ENCODE measurements at regions of chr13 and their contacts with region 1.

Region 1: DNA sequence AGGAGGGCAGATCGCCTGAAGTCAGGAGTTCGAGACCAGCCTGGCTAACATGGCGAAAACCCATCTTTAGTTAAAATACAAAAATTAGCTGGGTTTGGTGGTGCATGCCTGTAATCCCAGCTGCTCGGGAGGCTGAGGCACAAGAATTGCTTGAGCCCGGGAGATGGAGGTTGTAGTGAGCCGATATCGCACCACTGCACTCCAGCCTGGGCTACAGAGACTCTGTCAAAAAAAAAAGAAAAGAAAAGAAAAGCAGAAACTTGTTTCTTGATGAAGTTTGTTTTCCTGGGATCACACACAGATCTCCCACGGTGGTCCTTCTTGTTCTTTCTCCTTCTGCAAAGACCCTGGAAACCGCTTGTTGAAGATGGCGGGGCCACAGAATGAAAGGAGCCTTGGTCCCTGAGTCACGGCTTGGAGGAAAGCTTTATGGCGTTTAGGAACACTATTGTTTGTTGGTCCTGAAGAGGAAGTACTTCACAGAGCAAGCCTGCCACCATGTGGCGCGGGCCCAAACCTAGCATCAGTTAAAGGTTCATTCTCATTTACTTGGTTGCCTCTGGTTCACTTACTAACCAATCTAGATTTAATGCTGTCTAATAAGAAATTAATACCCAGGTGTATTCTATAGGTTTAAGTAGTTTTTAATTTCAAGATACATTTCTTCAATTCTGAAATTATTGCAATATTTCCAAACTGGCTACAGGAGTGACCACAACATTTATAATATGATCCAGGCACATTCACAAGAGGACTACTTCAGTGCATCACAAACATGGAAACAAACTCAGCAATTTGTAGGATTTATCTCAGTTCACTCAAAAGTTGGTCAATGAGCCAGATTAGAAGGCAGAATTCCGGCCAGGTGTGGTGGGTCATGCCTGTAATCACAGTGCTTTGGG is 21.3 kb upstream of the ARL11 start:
- DNase-seq: peak; percentile 68
- H3K4me3 ChIP-seq: no peak overlapping the region
- H3K27ac ChIP-seq: no peak overlapping the region
- H3K27me3 ChIP-seq: no peaks in the 10 kb centered on the region
- CTCF ChIP-seq: peak; percentile 87

Region 2: GRCh38 chr13:49240017-49240416 is 367.0 kb before region 1 on chr13:
- CTCF ChIA-PET with region 1: interaction called, 10 read pairs
- POLR2A ChIA-PET with region 1: no interaction called
- DNase-seq: no peak
- H3K4me3 ChIP-seq: no peak overlapping the region
- H3K27ac ChIP-seq: no peak overlapping the region
- H3K27me3 ChIP-seq: no peaks in the 10 kb centered on the region
- CTCF ChIP-seq: peak; percentile 62

Region 3: DNA sequence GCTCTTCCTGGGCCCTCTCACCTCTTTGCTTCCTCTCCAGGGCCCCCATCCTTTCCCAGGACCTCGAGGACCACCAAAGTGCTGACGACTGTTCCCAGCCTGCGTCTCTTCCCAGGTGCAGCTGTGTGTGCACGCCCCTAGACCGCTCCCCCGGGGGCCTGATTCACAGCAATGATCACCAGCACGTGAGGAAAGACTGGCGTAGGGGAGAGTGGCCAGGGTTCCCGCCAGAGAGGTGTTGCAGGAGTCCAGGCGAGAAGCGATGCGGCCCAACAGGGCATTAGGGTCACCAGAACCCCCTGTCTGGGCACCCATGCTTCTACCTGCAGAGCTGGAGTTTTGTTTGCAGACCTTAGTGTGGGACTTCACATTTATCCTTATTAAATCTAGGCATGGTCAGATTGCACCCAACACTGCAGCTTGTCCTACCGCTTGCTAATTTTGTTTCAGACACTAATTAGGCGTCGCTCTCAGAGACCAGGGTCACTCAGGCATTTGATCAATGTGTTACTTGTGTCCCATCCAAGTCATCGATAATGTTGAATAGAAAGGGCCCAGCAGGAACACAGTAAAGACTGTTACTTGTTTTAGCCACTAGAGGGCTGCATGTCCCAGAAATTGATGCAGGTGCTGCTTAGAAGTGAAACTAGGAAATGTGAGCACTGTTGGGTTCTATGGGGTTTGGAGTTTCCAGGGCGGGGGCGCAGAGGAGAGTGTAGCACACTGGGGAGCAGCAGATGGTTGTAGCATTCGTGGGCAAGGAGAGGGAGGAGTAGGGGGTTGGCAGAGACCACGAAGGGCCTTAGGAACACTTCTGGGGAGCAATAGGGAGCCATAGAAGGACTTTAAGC is 306.0 kb before region 1 on chr13:
- CTCF ChIA-PET with region 1: interaction called, 15 read pairs
- POLR2A ChIA-PET with region 1: no interaction called
- DNase-seq: peak; percentile 48
- H3K4me3 ChIP-seq: no peak overlapping the region
- H3K27ac ChIP-seq: no peak overlapping the region
- H3K27me3 ChIP-seq: no peaks in the 10 kb centered on the region
- CTCF ChIP-seq: peak; percentile 90

Measured in AG04450 (cell line).